ENCODE measurements at regions of chr1 and their contacts with region 1.

Region 1: GRCh38 chr1:45303582-45304310 is 22.9 kb upstream of the HPDL start:
- DNase-seq: peak; percentile 99
- ATAC-seq: peak; percentile 91 to 96 (median 92)
- H3K4me3 ChIP-seq: peak overlapping the region; percentile 75
- H3K27ac ChIP-seq: peak overlapping the region; percentile 94
- H3K4me1 ChIP-seq: peaks cover 14% of the 10 kb centered on the region
- H3K27me3 ChIP-seq: no peaks in the 10 kb centered on the region
- CTCF ChIP-seq: peak; percentile 59

Region 2: DNA sequence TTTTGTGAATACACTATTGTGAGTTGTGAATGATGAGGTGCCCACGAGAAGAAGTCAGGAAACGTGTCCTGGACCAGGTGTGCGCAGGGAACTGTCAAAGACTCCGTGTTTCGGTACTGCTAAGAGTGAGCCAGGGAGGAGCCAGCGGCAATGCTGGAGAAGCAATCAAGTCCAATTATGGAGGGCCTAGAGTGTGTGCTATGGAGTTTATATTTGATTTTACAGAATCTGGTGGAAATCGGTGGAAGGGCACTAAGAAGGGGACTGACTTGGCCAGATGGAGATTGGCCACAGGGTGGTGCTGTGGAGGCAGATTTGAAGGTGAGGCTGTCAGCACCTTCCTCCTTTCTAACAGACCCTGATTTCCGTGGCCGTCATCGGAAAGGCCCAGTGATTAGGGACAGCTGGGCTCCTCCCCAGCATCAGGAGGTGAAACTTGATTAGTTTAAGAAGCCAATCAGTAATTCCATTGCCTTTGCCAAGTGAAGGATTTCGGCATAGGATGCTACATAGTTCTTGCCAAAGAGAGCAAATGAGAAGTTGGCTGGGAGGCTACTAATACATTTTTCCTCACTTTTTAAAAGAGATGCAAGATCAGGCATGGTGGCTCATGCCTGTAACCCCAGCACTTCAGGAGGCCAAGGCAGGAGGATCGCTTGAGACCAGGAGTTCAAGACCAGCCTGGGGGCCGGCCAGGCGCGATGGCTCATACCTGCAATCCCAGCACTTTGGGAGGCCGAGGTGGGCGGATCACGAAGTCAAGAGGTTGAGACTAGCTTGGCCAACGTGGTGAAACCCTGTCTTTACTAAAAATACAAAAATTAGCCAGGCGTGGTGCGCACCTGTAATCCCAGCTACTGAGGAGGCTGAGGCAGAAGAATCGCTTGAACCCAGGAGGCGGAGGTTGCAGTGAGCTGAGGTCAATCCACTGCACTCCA is 467.7 kb before region 1 on chr1:
- intact Hi-C with region 1: loop called (anchors 5 kb)
- DNase-seq: peak; percentile 83 to 90
- ATAC-seq: peak; percentile 79 to 89 (median 79)
- H3K4me3 ChIP-seq: no peak overlapping the region
- H3K27ac ChIP-seq: no peak overlapping the region
- H3K4me1 ChIP-seq: no peaks in the 10 kb centered on the region
- H3K27me3 ChIP-seq: no peaks in the 10 kb centered on the region
- CTCF ChIP-seq: peak; percentile 82

Region 3: GRCh38 chr1:45011837-45012638 is 291.7 kb before region 1 on chr1 and contains the start of gene UROD:
- intact Hi-C with region 1: loop called (anchors 1 to 2 kb)
- DNase-seq: peak; percentile 93 to 95
- ATAC-seq: peak; percentile 90 to 93 (median 92)
- H3K4me3 ChIP-seq: peak within 1 kb of the TSS; percentile 100
- H3K27ac ChIP-seq: peak within 1 kb of the TSS; percentile 86
- H3K4me1 ChIP-seq: peaks cover 25% of the 10 kb centered on the region
- H3K27me3 ChIP-seq: no peaks in the 10 kb centered on the region
- CTCF ChIP-seq: no peak
- total RNA-seq, gene UROD: 50.4 to 79.6 (median 66.6) TPM

Region 4: DNA sequence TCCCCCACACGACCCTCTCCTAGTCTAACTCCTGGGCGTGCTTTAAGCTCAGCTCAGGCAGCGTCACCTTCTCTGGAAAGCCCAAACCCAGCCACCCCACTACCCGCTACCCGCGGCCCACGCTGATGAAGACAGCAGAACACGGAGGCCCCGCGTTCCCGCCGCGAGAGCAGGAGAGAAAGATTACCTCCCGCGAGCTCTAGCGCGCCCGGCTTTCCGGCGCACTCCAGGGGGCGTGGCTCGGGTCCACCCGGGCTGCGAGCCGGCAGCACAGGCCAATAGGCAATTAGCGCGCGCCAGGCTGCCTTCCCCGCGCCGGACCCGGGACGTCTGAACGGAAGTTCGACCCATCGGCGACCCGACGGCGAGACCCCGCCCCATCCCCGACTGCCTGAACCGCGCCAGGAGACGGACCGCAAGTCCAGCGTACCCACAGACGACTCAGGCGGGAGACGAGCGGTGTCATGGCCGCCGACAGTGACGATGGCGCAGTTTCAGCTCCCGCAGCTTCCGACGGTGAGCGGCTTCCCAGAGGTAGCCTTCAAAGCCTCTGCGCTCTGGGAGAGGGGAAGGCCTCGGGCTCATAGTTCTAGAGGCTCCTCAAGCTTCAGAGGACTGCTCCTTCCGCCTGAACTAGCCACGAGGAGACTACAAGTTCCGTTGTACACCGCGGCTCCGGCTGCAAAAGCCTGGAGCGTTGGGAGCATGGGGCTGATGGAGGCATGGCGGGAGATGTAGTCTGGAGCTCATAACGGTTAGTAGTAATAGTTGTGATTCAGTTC is 36.2 kb after region 1 on chr1 and contains the starts of genes MUTYH and TOE1:
- intact Hi-C with region 1: loop called (anchors 2 kb)
- DNase-seq: peak; percentile 94 to 95
- ATAC-seq: peak; percentile 93 to 96 (median 94)
- H3K4me3 ChIP-seq: peak within 1 kb of the TSS; percentile 91
- H3K27ac ChIP-seq: peak within 1 kb of the TSS; percentile 99
- H3K4me1 ChIP-seq: peaks cover 17% of the 10 kb centered on the region
- H3K27me3 ChIP-seq: no peaks in the 10 kb centered on the region
- CTCF ChIP-seq: no peak
- total RNA-seq, gene MUTYH: 7.7 to 16.6 (median 8.3) TPM
- total RNA-seq, gene TOE1: 3.1 to 5.9 (median 3.9) TPM